Prostate gland (tissue), 2 donors: ENCODE measurements at regions of chr10 and their contacts with region 1.

Region 1: DNA sequence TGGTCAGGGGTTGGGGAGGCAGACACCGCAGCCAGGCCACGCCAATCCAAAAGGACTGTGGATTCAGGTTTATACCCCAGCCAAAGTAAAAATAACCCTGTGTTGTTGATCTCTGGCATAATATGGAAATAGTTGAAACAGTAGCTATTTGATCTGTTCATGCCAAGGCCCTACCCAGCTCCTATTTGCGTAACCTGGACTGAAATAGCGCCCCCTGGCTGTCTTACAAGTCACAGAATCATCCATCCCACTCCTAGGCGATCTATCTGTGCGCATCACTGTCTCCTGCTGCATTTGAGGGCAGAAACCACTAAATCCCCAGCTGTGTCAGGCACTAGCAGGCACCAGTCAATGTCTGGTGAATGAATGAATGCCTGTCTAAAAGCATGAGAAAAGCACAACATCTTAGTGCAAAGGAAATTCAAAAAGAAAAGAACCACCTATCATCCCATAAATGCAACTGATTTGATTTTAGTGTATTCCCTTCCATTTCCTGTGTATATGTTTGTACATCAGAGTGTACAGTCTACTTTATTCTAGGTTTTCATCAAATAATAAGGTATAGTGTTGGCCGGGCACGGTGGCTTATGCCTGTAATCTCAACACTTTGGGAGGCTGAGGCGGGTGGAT is 160.0 kb downstream of the SLIT1 start:
- DNase-seq: peak; percentile 50
- H3K4me3 ChIP-seq: no peak overlapping the region
- H3K27ac ChIP-seq: no peak overlapping the region
- H3K4me1 ChIP-seq: no peaks in the 10 kb centered on the region
- H3K27me3 ChIP-seq: no peaks in the 10 kb centered on the region
- CTCF ChIP-seq: peak; percentile 16 to 59 (median 50)
- POLR2A ChIP-seq: no peak

Region 2: GRCh38 chr10:96765406-96766240 is 260.1 kb before region 1 on chr10:
- intact Hi-C with region 1: loop called (anchors 10 kb)
- DNase-seq: peak; percentile 41
- H3K4me3 ChIP-seq: no peak overlapping the region
- H3K27ac ChIP-seq: no peak overlapping the region
- H3K4me1 ChIP-seq: no peaks in the 10 kb centered on the region
- H3K27me3 ChIP-seq: no peaks in the 10 kb centered on the region
- CTCF ChIP-seq: peak; percentile 32 to 63 (median 58)
- POLR2A ChIP-seq: no peak

Region 3: GRCh38 chr10:96831867-96832720 is 193.6 kb before region 1 on chr10 and contains the start of gene LCOR:
- intact Hi-C with region 1: loop called (anchors 2 kb)
- DNase-seq: peak; percentile 78
- H3K4me3 ChIP-seq: peak within 1 kb of the TSS; percentile 85 to 97
- H3K27ac ChIP-seq: peak within 1 kb of the TSS; percentile 95 to 96
- H3K4me1 ChIP-seq: no peaks in the 10 kb centered on the region
- H3K27me3 ChIP-seq: no peaks in the 10 kb centered on the region
- CTCF ChIP-seq: no peak
- POLR2A ChIP-seq: peak; percentile 61
- total RNA-seq, gene LCOR: 32.8 to 40.0 TPM